Transverse colon (tissue), 4 donors: ENCODE measurements at regions of chr5 and their contacts with region 1.

Region 1: GRCh38 chr5:164498438-164498837 is 993.0 kb downstream of the MAT2B start:
- DNase-seq: no peak
- H3K4me3 ChIP-seq: no peak overlapping the region
- H3K27ac ChIP-seq: no peak overlapping the region
- H3K4me1 ChIP-seq: no peaks in the 10 kb centered on the region
- H3K27me3 ChIP-seq: no peaks in the 10 kb centered on the region
- CTCF ChIP-seq: no peak
- EP300 ChIP-seq: no peak
- POLR2A ChIP-seq: no peak

Region 2: GRCh38 chr5:163578652-163579051 is 919.8 kb before region 1 on chr5:
- in situ Hi-C with region 1: loop called in 2 of 4 experiments (anchors 25 kb)
- intact Hi-C with region 1: loop called (anchors 5 kb)
- DNase-seq: no peak
- H3K4me3 ChIP-seq: no peak overlapping the region
- H3K27ac ChIP-seq: no peak overlapping the region
- H3K4me1 ChIP-seq: peaks cover 0 to 17% (median 4%) of the 10 kb centered on the region in 4 donors
- H3K27me3 ChIP-seq: no peaks in the 10 kb centered on the region
- CTCF ChIP-seq: no peak
- EP300 ChIP-seq: no peak
- POLR2A ChIP-seq: no peak

Region 3: GRCh38 chr5:164394686-164395194 is 103.7 kb before region 1 on chr5:
- in situ Hi-C with region 1: no loop called
- intact Hi-C with region 1: no loop called
- DNase-seq: no peak
- H3K4me3 ChIP-seq: no peak overlapping the region
- H3K27ac ChIP-seq: no peak overlapping the region
- H3K4me1 ChIP-seq: no peaks in the 10 kb centered on the region
- H3K27me3 ChIP-seq: no peaks in the 10 kb centered on the region
- CTCF ChIP-seq: no peak
- EP300 ChIP-seq: no peak
- POLR2A ChIP-seq: no peak

Region 4: DNA sequence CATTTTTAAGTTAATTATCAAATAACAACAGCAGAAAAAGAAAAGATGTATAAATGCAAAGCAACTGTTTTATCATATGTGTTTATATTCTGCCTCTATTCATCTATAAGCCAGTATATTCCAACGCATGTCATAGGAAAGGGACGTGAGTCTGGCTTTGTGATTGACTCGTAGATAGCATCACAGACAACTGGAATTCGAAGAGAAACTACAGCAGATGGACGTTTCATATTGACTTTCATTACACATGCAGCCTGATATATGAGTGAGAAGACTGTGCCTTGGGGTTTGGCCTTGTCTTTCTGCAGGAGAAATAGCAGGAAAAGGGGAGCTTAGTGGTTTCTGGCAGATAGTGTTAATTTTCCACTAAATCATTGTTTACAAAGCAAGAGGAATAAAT is 118.9 kb after region 1 on chr5:
- in situ Hi-C with region 1: no loop called
- intact Hi-C with region 1: no loop called
- DNase-seq: no peak
- H3K4me3 ChIP-seq: no peak overlapping the region
- H3K27ac ChIP-seq: no peak overlapping the region
- H3K4me1 ChIP-seq: no peaks in the 10 kb centered on the region
- H3K27me3 ChIP-seq: no peaks in the 10 kb centered on the region
- CTCF ChIP-seq: no peak
- EP300 ChIP-seq: no peak
- POLR2A ChIP-seq: no peak